CD4-positive, alpha-beta memory T cell (primary cell): ENCODE measurements at regions of chr14 and their contacts with region 1.

Region 1: DNA sequence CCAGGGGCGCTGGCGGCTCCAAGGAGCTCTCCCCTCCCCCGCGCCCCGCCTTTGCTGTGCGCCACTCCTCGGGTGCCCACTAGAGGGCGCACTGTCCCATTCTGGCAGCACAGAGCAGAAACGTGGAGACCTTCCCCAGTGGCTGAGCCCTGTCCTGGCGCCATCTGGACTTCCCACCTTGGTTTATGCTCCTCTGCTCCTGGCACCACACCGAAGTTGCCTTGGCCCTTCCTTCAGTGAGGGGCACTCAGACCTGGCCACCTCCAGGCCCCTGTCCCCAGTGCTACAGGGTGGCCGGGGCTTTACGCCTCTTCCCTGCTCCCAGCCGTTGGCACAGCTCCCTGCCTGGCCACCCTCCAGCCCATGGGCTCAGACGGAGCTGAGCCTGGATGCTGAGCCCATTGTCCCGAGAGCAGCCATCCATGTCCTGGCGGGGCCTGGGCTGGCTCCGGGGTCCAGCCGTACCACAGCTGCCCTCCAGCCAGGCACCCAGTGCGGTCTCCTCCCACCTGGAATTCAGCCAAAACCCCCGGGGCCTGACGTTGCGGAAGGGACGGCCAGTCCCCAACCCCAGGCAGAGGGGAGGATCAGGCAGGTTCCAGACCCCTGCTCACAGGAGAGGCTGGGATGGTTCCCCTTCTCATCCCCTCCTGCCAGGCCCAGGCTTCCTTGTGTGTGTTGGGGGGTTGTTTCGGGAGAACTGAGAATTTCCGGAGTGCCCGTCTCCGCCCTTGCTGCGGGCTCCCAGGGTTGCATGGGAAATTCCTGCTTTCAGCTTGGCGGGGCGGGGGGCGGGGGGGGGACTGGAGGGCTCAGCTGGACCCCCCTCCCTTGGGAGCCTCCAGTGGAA is 5.5 kb upstream of the CRIP1 start:
- DNase-seq: peak; percentile 89 to 95 (median 90)
- H3K4me3 ChIP-seq: peak overlapping the region; percentile 49 to 80
- H3K4me3 Mint-ChIP-seq: peak overlapping the region; percentile 83 to 92 (median 86)
- H3K27ac ChIP-seq: peak overlapping the region; percentile 97
- H3K27ac Mint-ChIP-seq: peak overlapping the region; percentile 96 to 100 (median 100)
- H3K4me1 ChIP-seq: peaks cover 82% of the 10 kb centered on the region
- H3K4me1 Mint-ChIP-seq: peaks cover 31 to 78% (median 57%) of the 10 kb centered on the region in 4 donors
- H3K27me3 ChIP-seq: no peaks in the 10 kb centered on the region
- H3K27me3 Mint-ChIP-seq: no peaks in the 10 kb centered on the region

Region 2: GRCh38 chr14:105398044-105398725 is 83.0 kb before region 1 on chr14 and contains the start of gene TEX22:
- CTCF ChIA-PET with region 1: interaction called, 7 read pairs
- POLR2A ChIA-PET with region 1: interaction called, 11 read pairs
- intact Hi-C with region 1: no loop called
- DNase-seq: peak; percentile 79 to 86 (median 79)
- H3K4me3 ChIP-seq: peak within 1 kb of the TSS; percentile 57 to 74
- H3K4me3 Mint-ChIP-seq: peak within 1 kb of the TSS; percentile 77 to 85 (median 82)
- H3K27ac ChIP-seq: peak within 1 kb of the TSS; percentile 80
- H3K27ac Mint-ChIP-seq: peak within 1 kb of the TSS; percentile 58 to 90 (median 82)
- H3K4me1 ChIP-seq: peaks cover 18% of the 10 kb centered on the region
- H3K4me1 Mint-ChIP-seq: peaks cover 4 to 18% (median 10%) of the 10 kb centered on the region in 4 donors
- H3K27me3 ChIP-seq: no peaks in the 10 kb centered on the region
- H3K27me3 Mint-ChIP-seq: no peaks in the 10 kb centered on the region
- total RNA-seq, gene TEX22: 4.7 to 7.5 TPM

Region 3: GRCh38 chr14:105448706-105449111 is 32.5 kb before region 1 on chr14:
- CTCF ChIA-PET with region 1: interaction called, 9 read pairs
- POLR2A ChIA-PET with region 1: interaction called, 6 read pairs
- intact Hi-C with region 1: loop called (anchors 2 kb)
- DNase-seq: peak; percentile 52 to 77 (median 64)
- H3K4me3 ChIP-seq: no peak overlapping the region
- H3K4me3 Mint-ChIP-seq: no peak overlapping the region
- H3K27ac ChIP-seq: no peak overlapping the region
- H3K27ac Mint-ChIP-seq: peak overlapping the region in 2 of 7 donors; percentile 15 to 42
- H3K4me1 ChIP-seq: no peaks in the 10 kb centered on the region
- H3K4me1 Mint-ChIP-seq: no peaks in the 10 kb centered on the region
- H3K27me3 ChIP-seq: no peaks in the 10 kb centered on the region
- H3K27me3 Mint-ChIP-seq: no peaks in the 10 kb centered on the region

Region 4: DNA sequence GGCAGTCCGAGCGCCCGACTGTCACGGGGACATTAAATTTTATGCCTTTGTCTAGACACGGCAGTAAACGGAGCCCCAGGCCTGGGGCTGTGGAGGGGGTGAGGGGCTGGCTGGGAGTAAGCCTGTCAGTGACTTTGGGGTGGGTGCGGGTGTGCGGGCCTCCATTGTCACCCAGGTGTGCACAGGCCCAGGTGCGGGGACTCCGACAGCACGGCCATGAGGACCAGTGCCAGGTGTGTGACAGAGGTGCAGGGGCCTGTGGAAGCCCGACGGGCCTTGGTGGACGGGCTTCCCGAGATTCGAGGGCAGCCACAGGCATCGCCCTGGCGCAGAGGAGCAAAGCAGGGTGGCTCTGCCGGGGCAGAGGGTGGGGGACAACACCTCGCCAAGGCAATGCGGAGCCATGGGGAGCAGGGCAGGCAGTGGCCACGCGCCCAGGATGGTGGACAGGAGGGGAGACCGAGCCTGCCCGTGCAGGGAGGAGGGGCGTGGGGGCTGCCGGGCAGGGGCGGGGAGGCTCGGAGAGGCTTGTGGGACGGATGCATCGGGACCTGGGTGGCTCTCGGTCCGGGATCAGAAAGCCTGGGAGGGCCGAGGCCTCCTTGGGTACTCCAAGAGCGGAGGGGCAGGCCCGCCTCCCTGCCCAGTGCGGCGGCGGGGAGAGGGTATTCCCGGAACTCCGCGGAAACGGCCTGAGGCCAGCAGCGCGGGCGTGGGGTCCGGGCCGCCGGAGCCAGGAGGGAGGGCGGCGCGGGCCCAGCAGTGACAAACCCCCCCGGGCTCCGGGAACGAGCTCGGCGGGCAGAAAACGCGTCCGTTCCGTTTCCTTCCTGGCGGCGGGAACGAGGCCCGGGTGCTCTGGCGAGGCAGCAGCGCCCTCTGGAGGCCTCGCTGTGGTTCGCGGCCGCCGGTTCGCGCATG is 46.7 kb after region 1 on chr14:
- CTCF ChIA-PET with region 1: interaction called, 7 read pairs
- POLR2A ChIA-PET with region 1: interaction called, 21 read pairs
- intact Hi-C with region 1: no loop called
- DNase-seq: peak; percentile 69 to 83 (median 78)
- H3K4me3 ChIP-seq: peak overlapping the region in 1 of 2 donors; percentile 54
- H3K4me3 Mint-ChIP-seq: peak overlapping the region; percentile 27 to 84 (median 66)
- H3K27ac ChIP-seq: no peak overlapping the region
- H3K27ac Mint-ChIP-seq: peak overlapping the region in 4 of 7 donors; percentile 43 to 83 (median 57)
- H3K4me1 ChIP-seq: peaks cover 29% of the 10 kb centered on the region
- H3K4me1 Mint-ChIP-seq: peaks cover 4 to 41% (median 19%) of the 10 kb centered on the region in 4 donors
- H3K27me3 ChIP-seq: no peaks in the 10 kb centered on the region
- H3K27me3 Mint-ChIP-seq: peaks cover 1 to 2% of the 10 kb centered on the region in 2 donors